Activated B cell treated with CpG ODN at 0.5 μM for 24 hours (primary cell): ENCODE measurements at regions of chr16 and their contacts with region 1.

Region 1: DNA sequence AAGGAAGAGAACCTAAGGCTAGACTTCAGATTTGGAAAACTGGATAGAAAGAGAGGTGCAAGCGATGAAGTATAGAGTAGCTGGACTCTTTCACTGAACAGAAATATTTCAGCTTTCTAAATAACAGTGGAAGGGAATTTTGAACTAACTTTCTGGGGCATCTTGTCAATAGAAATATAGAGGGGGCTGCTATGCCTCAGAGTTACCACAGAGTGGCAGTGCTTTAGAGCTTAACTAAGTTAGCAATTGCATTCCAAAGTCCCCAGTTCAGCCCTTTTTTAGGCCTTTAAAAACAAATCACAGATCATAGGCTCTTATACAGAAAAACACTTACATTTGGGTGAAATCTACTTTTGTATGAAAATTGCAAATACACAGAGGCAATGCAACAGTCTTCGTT is 154.2 kb upstream of the CDH8 start:
- DNase-seq: no peak
- ATAC-seq: no peak
- H3K4me3 Mint-ChIP-seq: no peak overlapping the region
- H3K27ac Mint-ChIP-seq: no peak overlapping the region
- H3K4me1 Mint-ChIP-seq: no peaks in the 10 kb centered on the region
- H3K27me3 Mint-ChIP-seq: no peaks in the 10 kb centered on the region
- CTCF ChIP-seq: no peak

Region 2: DNA sequence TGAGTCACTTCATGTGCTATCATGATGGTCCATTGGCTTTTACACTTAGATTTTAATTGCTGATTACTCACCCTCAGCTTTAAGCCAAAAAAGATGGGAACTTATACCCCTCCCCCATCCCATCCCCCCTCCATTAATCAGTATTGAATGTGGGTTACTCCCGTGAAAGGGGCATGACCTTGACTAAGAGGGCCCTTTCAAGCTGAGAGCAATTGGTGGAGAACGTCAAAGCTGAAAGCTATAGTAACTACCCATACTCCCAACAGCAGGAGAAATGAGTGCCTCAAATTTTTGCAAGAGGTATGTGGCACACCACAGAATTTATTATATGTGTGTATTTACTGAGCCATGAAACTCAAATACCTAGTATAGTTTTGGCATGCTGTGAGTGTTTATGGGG is 54.5 kb before region 1 on chr16:
- CTCF ChIA-PET with region 1: no interaction called
- POLR2A ChIA-PET with region 1: no interaction called
- intact Hi-C with region 1: loop called (anchors 10 kb)
- DNase-seq: no peak
- ATAC-seq: no peak
- H3K4me3 Mint-ChIP-seq: no peak overlapping the region
- H3K27ac Mint-ChIP-seq: no peak overlapping the region
- H3K4me1 Mint-ChIP-seq: no peaks in the 10 kb centered on the region
- H3K27me3 Mint-ChIP-seq: no peaks in the 10 kb centered on the region
- CTCF ChIP-seq: no peak